Activated T-helper 2 cell treated with anti-CD3 and anti-CD28 coated beads, Interferon-gamma antibody, Interleukin-2, Interleukin-4, amounts not matched to agents 10 μg/mL and 5 μg/mL and 100 μg/mL, durations not matched to agents 14 hours and 24 hours and 36 hours (primary cell): ENCODE measurements at regions of chr2 and their contacts with region 1.

Region 1: GRCh38 chr2:46461011-46461674 is 18.2 kb upstream of the TMEM247 start:
- DNase-seq: peak; percentile 60
- H3K4me3 Mint-ChIP-seq: no peak overlapping the region
- H3K27ac Mint-ChIP-seq: peak overlapping the region; percentile 62
- H3K4me1 Mint-ChIP-seq: peaks cover 33% of the 10 kb centered on the region
- H3K27me3 Mint-ChIP-seq: no peaks in the 10 kb centered on the region

Region 2: GRCh38 chr2:45993476-45993991 is 467.6 kb before region 1 on chr2:
- intact Hi-C with region 1: loop called (anchors 1 kb)
- DNase-seq: peak; percentile 44
- H3K4me3 Mint-ChIP-seq: no peak overlapping the region
- H3K27ac Mint-ChIP-seq: no peak overlapping the region
- H3K4me1 Mint-ChIP-seq: peaks cover 2% of the 10 kb centered on the region
- H3K27me3 Mint-ChIP-seq: peaks cover 6% of the 10 kb centered on the region

Region 3: DNA sequence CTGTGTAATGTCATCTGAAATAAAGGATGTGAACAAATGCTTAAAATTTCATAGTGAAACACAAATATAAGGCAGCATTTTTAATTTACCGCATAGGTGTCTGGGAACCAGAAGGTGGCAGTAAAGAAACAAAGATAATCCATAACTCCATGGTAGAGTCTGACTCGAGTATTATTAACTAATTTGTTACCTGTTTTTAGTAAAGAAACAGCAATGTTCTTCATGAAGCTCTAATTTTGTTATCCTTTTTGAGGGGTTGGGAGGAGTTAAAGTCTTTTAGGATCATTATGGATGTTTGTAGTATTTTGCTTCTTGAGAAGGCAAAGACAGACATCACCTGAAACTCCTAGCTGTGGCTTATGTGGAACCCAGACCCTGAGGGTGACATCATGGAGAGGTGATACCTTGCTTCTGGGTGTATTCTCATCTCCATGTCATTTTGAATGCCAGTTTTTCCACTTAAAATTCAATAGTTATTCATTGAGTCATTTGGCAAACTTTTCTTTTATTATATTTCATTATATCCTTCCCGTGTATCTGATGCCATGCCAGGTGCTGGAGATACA is 450.1 kb before region 1 on chr2:
- intact Hi-C with region 1: loop called (anchors 1 kb)
- DNase-seq: no peak
- H3K4me3 Mint-ChIP-seq: no peak overlapping the region
- H3K27ac Mint-ChIP-seq: peak overlapping the region; percentile 23
- H3K4me1 Mint-ChIP-seq: peaks cover 27% of the 10 kb centered on the region
- H3K27me3 Mint-ChIP-seq: no peaks in the 10 kb centered on the region

Region 4: GRCh38 chr2:47272031-47272864 is 811.1 kb after region 1 on chr2:
- intact Hi-C with region 1: no loop called
- DNase-seq: peak; percentile 46
- H3K4me3 Mint-ChIP-seq: peak overlapping the region; percentile 52
- H3K27ac Mint-ChIP-seq: no peak overlapping the region
- H3K4me1 Mint-ChIP-seq: peaks cover 4% of the 10 kb centered on the region
- H3K27me3 Mint-ChIP-seq: peaks cover 2% of the 10 kb centered on the region